PC-9 (cell line): ENCODE measurements at regions of chrX and their contacts with region 1.

Region 1: GRCh38 chrX:136909706-136910564 is 29.4 kb upstream of the RBMX start:
- DNase-seq: peak; percentile 88 to 91
- H3K4me3 ChIP-seq: peak overlapping the region; percentile 96
- H3K27ac ChIP-seq: peak overlapping the region; percentile 69
- H3K4me1 ChIP-seq: peaks cover 10% of the 10 kb centered on the region
- H3K27me3 ChIP-seq: no peaks in the 10 kb centered on the region
- CTCF ChIP-seq: no peak

Region 2: DNA sequence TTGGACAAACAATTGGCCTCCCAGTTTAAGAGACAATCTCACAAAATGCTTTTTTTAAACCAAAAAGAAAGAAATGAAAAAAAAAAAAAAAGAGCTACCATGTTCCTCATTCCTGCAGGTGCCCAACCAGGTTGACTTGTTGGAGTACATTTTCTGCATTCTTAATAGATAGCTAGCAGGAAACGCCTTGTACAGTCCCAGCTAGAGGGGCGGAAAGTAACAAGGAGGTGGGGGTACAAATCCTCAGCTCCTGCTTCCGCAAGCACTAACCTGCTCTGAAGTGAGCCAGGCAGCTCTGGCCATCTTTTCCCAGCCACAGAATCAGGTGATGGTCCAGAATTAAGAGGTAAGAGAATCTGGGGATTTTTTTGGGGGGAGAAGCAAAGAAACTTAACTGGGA is 378.0 kb before region 1 on chrX and contains the start of gene VGLL1:
- CTCF ChIA-PET with region 1: interaction called, 15 read pairs
- POLR2A ChIA-PET with region 1: interaction called, 7 read pairs
- intact Hi-C with region 1: no loop called
- DNase-seq: peak; percentile 76 to 97
- H3K4me3 ChIP-seq: peak within 1 kb of the TSS; percentile 71
- H3K27ac ChIP-seq: peak within 1 kb of the TSS; percentile 95
- H3K4me1 ChIP-seq: peaks cover 73% of the 10 kb centered on the region
- H3K27me3 ChIP-seq: no peaks in the 10 kb centered on the region
- CTCF ChIP-seq: no peak
- total RNA-seq, gene VGLL1: 112 and 154 TPM in 2 replicates

Region 3: GRCh38 chrX:136665258-136665900 is 244.6 kb before region 1 on chrX:
- CTCF ChIA-PET with region 1: no interaction called
- POLR2A ChIA-PET with region 1: no interaction called
- intact Hi-C with region 1: no loop called
- DNase-seq: no peak
- H3K4me3 ChIP-seq: no peak overlapping the region
- H3K27ac ChIP-seq: no peak overlapping the region
- H3K4me1 ChIP-seq: no peaks in the 10 kb centered on the region
- H3K27me3 ChIP-seq: no peaks in the 10 kb centered on the region
- CTCF ChIP-seq: no peak

Region 4: DNA sequence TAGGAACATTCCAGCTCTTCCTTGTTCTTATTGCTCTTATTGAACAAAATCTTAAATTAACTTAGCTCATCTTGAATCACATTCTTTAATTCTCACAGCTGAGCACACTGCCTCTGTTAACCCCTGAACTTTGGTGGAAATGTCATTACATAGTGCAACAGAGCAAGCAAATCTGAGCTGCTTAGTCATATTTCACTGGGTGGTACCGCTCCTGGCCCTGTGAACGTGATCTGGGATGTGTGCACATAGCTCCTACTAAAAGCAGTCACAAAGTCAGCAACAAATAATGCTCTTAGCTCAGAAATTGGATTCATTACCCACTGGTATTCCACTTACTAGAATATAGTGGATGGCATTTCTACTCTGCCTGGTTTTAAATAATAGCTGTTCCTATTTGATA is 157.1 kb before region 1 on chrX:
- CTCF ChIA-PET with region 1: no interaction called
- POLR2A ChIA-PET with region 1: interaction called, 11 read pairs
- intact Hi-C with region 1: no loop called
- DNase-seq: peak in 1 of 2 experiments; percentile 45
- H3K4me3 ChIP-seq: no peak overlapping the region
- H3K27ac ChIP-seq: no peak overlapping the region
- H3K4me1 ChIP-seq: no peaks in the 10 kb centered on the region
- H3K27me3 ChIP-seq: no peaks in the 10 kb centered on the region
- CTCF ChIP-seq: no peak

Region 5: GRCh38 chrX:136880452-136881013 is 29.4 kb before region 1 on chrX and contains the start of gene RBMX:
- CTCF ChIA-PET with region 1: no interaction called
- POLR2A ChIA-PET with region 1: interaction called, 10 read pairs
- intact Hi-C with region 1: loop called (anchors 1 kb)
- DNase-seq: peak; percentile 81 to 92
- H3K4me3 ChIP-seq: peak within 1 kb of the TSS; percentile 97
- H3K27ac ChIP-seq: peak within 1 kb of the TSS; percentile 69
- H3K4me1 ChIP-seq: peaks cover 4% of the 10 kb centered on the region; the same call in 1 of the 2 replicates
- H3K27me3 ChIP-seq: no peaks in the 10 kb centered on the region
- CTCF ChIP-seq: no peak
- total RNA-seq, gene RBMX: 275 and 285 TPM in 2 replicates

Region 6: DNA sequence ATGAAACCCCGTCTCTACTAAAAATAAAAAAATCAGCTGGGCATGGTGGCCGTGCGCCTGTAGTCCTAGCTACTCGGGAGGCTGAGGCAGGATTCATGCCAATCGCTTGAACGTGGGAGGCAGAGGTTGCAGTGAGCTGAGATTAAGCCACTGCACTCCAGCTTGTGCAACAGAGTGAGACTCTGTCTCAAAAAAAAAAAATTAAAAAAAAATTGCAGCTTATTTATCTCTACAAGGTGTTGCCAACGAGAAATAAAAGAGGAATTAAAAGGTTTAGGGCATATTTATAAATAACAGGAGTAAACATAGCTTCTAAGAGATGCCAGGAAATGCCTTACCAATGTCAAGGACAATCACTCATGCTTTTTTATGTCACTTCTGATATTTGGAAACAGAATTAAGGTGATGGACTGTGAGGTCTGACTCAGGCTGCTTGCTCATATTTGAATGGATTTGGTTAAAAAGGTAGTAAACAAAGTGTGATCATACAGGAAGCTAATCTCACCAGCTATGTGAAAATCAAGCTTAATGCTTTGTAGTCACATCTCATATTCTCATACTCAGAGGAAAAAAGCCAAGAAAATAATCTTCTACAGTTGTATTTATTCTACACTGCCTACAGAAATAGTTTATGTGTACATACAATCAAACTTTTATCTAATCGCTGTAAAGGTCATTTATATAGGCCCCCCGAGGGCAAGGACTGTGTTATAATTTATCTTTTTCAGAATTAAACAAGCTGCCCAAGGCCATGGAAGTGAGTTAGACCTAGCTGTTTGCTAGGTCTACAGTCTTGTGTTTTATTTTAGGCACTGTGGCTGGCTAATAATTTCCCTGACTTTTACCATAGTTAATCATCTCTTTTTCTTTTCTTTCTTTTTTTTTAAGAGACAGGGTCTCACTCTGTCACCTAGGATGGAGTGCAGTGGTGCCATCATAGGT is 31.7 kb after region 1 on chrX:
- CTCF ChIA-PET with region 1: no interaction called
- POLR2A ChIA-PET with region 1: interaction called, 17 read pairs
- intact Hi-C with region 1: no loop called
- DNase-seq: no peak
- H3K4me3 ChIP-seq: no peak overlapping the region
- H3K27ac ChIP-seq: no peak overlapping the region
- H3K4me1 ChIP-seq: no peaks in the 10 kb centered on the region
- H3K27me3 ChIP-seq: no peaks in the 10 kb centered on the region
- CTCF ChIP-seq: no peak